CD4-positive, alpha-beta memory T cell (primary cell): ENCODE measurements at regions of chr1 and their contacts with region 1.

Region 1: GRCh38 chr1:31789259-31790065 is 25.3 kb upstream of the ADGRB2 start:
- DNase-seq: peak; percentile 87 to 92 (median 90)
- H3K4me3 ChIP-seq: peak overlapping the region in 1 of 2 donors; percentile 78
- H3K4me3 Mint-ChIP-seq: peak overlapping the region; percentile 89 to 96 (median 94)
- H3K27ac ChIP-seq: peak overlapping the region; percentile 71
- H3K27ac Mint-ChIP-seq: peak overlapping the region in 6 of 7 donors; percentile 59 to 99 (median 92)
- H3K4me1 ChIP-seq: peaks cover 9% of the 10 kb centered on the region
- H3K4me1 Mint-ChIP-seq: peaks cover 5 to 19% (median 10%) of the 10 kb centered on the region in 4 donors
- H3K27me3 ChIP-seq: no peaks in the 10 kb centered on the region
- H3K27me3 Mint-ChIP-seq: no peaks in the 10 kb centered on the region

Region 2: DNA sequence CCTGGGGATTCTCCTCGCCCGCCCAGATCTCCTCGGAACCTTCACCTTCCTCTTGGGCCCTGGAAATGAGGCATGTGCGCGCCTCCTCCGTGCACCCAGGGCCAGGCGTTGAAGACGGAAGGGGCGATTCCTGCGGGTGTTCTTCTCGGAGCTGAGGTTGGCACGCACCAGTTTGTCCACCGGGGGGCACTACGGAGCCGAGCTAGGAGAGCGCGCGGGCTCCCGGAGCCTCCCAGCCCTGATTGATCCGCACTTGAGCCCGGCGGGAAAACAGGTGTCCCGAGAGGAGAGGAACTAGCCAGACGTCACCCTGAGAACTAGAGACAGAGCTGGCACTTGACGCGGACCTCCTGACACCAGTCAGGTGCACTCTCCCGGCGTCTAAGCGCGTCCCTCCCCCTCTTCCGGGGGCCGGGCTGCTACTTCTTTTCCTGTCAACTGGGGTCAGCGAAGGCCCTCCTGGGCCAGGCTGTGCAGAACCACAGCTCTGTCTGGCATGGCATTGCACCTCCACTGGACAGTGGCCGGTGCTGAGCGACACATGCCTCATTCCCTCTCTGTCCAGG is 394.8 kb before region 1 on chr1:
- CTCF ChIA-PET with region 1: interaction called, 8 read pairs
- POLR2A ChIA-PET with region 1: no interaction called
- intact Hi-C with region 1: loop called (anchors 1 kb)
- DNase-seq: peak; percentile 63 to 69 (median 65)
- H3K4me3 ChIP-seq: peak overlapping the region; percentile 47 to 62
- H3K4me3 Mint-ChIP-seq: peak overlapping the region; percentile 81 to 90 (median 85)
- H3K27ac ChIP-seq: no peak overlapping the region
- H3K27ac Mint-ChIP-seq: peak overlapping the region in 5 of 7 donors; percentile 22 to 64 (median 50)
- H3K4me1 ChIP-seq: peaks cover 10% of the 10 kb centered on the region
- H3K4me1 Mint-ChIP-seq: peaks cover 4 to 15% (median 10%) of the 10 kb centered on the region in 4 donors
- H3K27me3 ChIP-seq: no peaks in the 10 kb centered on the region
- H3K27me3 Mint-ChIP-seq: peaks cover 0 to 7% of the 10 kb centered on the region in 2 donors

Region 3: DNA sequence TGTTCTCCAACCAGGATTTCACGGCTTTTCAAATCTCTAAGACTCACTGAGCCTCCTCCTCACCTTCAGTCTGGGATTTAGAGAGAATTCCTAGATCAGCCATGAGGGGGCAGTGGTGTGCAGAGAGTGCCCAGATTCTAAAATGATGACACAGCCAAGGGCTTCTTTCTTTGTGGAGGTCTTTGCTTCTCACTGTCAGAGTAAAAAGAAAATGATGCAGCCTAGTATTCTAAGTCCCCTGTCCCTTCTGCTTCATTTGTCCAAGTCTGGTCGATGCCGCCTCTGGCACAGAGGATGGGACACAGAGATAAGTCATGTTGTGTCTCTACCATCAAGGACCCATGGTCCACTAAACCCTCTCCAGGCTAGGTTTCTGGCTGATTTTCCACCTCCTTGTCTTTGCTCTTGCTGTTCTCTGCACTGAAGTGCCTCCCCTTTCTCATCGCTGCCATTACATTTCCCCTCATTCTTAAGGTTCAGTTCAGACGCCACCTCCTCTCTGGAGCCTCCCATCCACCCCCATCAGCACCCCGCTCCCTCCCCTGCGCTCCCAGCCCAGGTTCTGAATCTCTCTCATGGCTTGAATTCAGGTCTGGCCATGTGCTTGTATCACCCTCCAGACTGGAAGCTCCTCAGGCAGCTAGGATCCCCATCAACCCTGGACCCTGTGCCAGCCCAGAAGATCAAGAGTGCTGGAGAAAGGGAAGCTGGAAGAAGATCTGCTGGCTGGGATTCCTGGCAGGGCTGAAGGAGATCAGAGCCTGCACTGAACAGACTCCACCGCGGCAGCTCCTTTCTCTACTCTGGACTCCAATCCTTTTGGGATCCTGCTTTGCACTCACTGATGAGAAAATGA is 225.1 kb before region 1 on chr1:
- CTCF ChIA-PET with region 1: interaction called, 19 read pairs
- POLR2A ChIA-PET with region 1: interaction called, 3 read pairs
- intact Hi-C with region 1: loop called (anchors 1 kb)
- DNase-seq: peak; percentile 30 to 46 (median 36)
- H3K4me3 ChIP-seq: no peak overlapping the region
- H3K4me3 Mint-ChIP-seq: no peak overlapping the region
- H3K27ac ChIP-seq: no peak overlapping the region
- H3K27ac Mint-ChIP-seq: no peak overlapping the region
- H3K4me1 ChIP-seq: no peaks in the 10 kb centered on the region
- H3K4me1 Mint-ChIP-seq: no peaks in the 10 kb centered on the region
- H3K27me3 ChIP-seq: no peaks in the 10 kb centered on the region
- H3K27me3 Mint-ChIP-seq: peaks cover 15 to 30% of the 10 kb centered on the region in 2 donors

Region 4: DNA sequence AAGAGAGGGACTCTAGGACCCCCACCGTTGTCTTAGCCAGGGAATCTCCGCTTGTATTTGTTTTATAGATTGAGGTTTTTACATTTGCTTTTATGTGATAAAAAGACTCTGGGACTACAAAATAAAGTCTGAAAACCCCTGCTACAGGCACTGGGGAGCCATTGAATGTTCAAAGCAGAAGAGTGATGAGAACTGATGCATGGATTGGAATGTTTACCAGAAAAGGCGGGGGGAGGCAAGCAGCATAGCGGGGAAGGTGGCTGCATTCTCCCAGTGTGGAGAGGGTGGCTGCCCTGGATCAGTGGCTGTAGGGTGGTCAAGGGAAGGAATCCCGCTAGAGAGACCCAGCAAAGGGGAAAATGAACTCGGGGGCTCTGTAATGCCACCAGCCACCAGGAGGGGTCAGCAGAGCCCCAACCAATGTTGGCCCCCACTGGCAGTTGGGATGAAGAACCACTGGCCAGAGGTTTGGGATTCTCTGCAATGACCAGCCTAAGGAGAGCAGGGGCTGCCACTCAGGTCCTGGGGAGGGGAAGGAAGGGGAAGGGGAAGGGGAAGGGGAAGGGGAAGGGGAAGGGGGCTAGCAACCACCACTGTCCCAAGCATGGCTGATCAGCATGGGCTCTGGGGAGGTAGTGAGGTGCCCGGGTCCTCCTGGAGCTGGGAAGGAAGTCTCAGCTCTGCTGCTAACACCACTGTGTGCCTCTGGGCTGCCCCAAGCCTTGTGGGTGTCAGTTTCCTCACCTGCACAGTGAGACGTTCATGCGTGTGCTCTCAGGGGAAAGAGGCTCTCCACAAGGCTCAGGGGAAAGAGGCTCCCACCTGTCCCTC is 125.6 kb before region 1 on chr1:
- CTCF ChIA-PET with region 1: interaction called, 126 read pairs
- POLR2A ChIA-PET with region 1: interaction called, 7 read pairs
- intact Hi-C with region 1: loop called (anchors 1 kb)
- DNase-seq: peak; percentile 36 to 56 (median 39)
- H3K4me3 ChIP-seq: no peak overlapping the region
- H3K4me3 Mint-ChIP-seq: no peak overlapping the region
- H3K27ac ChIP-seq: no peak overlapping the region
- H3K27ac Mint-ChIP-seq: no peak overlapping the region
- H3K4me1 ChIP-seq: no peaks in the 10 kb centered on the region
- H3K4me1 Mint-ChIP-seq: no peaks in the 10 kb centered on the region
- H3K27me3 ChIP-seq: no peaks in the 10 kb centered on the region
- H3K27me3 Mint-ChIP-seq: peaks cover 4 to 7% of the 10 kb centered on the region in 2 donors

Region 5: DNA sequence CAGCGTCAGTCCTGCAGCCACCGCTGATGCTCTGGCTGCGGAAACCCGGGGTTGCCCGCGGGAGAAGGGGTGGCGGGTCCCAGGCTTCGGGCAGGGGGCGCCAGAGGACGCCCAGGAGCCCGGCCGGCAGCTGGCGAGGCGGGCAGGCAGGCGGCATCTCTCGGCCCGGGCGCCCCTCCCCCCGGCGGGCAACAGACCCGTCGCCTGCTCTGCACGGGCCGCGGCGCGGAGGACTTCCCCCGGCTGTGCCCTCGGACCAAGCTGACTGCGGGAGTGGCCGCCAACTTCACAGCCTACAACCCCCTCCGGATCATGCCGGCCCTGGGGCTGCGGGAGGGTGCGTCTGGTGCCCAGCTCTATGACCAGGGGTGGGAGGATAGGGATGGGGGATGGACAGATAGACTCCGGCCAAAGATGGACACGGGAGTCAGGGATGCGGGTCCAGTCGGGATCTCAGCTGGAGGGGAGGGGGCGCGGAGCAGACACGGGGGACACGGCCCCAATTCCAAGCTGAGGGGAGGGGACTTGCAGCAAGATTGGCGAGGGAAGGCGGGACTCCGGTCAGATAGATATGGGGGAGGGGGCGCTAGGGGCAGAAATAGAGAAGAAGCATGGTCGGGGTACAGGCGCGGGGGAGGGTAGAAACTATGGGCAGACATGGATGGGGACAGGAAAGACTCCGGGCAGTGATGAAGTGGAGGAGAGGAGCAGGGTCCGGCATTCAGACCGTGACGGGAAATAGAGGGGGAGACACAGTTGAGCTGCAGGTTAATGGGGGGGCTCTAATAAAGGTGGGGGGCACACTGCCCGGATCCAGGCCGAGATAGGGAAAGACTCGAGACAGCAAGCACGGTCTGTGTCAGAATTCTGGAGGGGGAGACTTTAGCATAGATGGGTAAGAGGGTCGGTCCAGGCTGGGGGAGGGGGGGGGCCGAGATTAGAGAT is 26.5 kb before region 1 on chr1:
- CTCF ChIA-PET with region 1: interaction called, 57 read pairs
- POLR2A ChIA-PET with region 1: interaction called, 32 read pairs
- intact Hi-C with region 1: loop called (anchors 1 kb)
- DNase-seq: peak; percentile 65 to 71 (median 65)
- H3K4me3 ChIP-seq: peak overlapping the region; percentile 51 to 61
- H3K4me3 Mint-ChIP-seq: peak overlapping the region; percentile 55 to 88 (median 82)
- H3K27ac ChIP-seq: no peak overlapping the region
- H3K27ac Mint-ChIP-seq: peak overlapping the region in 3 of 7 donors; percentile 32 to 67 (median 48)
- H3K4me1 ChIP-seq: peaks cover 35% of the 10 kb centered on the region
- H3K4me1 Mint-ChIP-seq: peaks cover 11 to 39% (median 17%) of the 10 kb centered on the region in 4 donors
- H3K27me3 ChIP-seq: peaks cover 10% of the 10 kb centered on the region
- H3K27me3 Mint-ChIP-seq: peaks cover 0 to 2% of the 10 kb centered on the region in 2 donors

Region 6: GRCh38 chr1:32063261-32063681 is 273.8 kb after region 1 on chr1:
- CTCF ChIA-PET with region 1: interaction called, 10 read pairs
- POLR2A ChIA-PET with region 1: no interaction called
- intact Hi-C with region 1: no loop called
- DNase-seq: peak in 4 of 5 donors; percentile 16 to 41 (median 36)
- H3K4me3 ChIP-seq: no peak overlapping the region
- H3K4me3 Mint-ChIP-seq: no peak overlapping the region
- H3K27ac ChIP-seq: no peak overlapping the region
- H3K27ac Mint-ChIP-seq: peak overlapping the region in 6 of 7 donors; percentile 25 to 85 (median 70)
- H3K4me1 ChIP-seq: peaks cover 13% of the 10 kb centered on the region
- H3K4me1 Mint-ChIP-seq: peaks cover 8 to 23% (median 13%) of the 10 kb centered on the region in 4 donors
- H3K27me3 ChIP-seq: no peaks in the 10 kb centered on the region
- H3K27me3 Mint-ChIP-seq: no peaks in the 10 kb centered on the region